T-cell (primary cell): ENCODE measurements at regions of chr15 and their contacts with region 1.

Region 1: GRCh38 chr15:98658831-98659699 is 10.7 kb downstream of the IGF1R start:
- DNase-seq: peak in 14 of 35 experiments; percentile 6 to 70 (median 20)
- ATAC-seq: peak; percentile 52 to 86 (median 78)
- H3K4me3 ChIP-seq: no peak overlapping the region
- H3K4me3 Mint-ChIP-seq: no peak overlapping the region
- H3K27ac ChIP-seq: no peak overlapping the region
- H3K27ac Mint-ChIP-seq: no peak overlapping the region
- H3K4me1 ChIP-seq: peaks cover 3 to 10% of the 10 kb centered on the region in 2 experiments
- H3K4me1 Mint-ChIP-seq: peaks cover 56 to 68% (median 58%) of the 10 kb centered on the region in 3 donors
- H3K27me3 ChIP-seq: peaks cover 0 to 5% of the 10 kb centered on the region in 2 experiments
- H3K27me3 Mint-ChIP-seq: peaks cover 0 to 13% of the 10 kb centered on the region in 2 donors

Region 2: DNA sequence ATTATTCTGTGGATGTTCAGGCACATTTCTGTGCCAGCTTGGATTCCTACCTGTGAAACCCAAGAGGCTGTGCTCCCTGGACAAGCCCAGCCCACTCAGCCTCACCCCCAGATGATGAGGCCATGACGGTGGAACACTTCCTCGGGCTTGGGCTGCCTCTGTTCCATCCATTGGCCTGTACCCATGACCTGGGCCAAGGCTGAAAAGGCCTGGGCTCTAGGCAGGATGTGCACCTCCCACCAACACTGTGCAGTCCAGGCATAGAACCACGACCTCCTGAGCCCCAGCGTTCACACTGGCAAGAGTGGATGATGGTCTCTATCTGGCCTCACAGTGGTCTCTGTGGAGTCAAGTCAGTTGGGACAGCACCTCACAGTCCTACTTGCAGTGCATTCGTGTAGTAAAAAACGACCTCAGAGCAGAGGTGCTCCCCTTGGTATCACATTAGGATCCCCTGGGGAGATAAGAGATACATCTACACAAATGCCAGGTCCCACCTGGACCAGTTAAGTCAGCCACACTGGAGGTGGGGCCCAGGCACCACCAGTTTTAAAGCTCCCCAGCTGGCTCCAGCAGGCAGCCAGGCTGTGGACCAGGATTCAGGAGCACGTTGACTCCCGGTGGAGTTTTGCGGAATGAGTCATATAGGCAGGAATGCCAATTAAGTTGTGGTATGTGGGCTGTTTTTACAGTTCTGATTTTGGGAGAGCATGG is 49.8 kb before region 1 on chr15:
- CTCF ChIA-PET with region 1: no interaction called
- POLR2A ChIA-PET with region 1: no interaction called
- DNase-seq: no peak
- ATAC-seq: no peak
- H3K4me3 ChIP-seq: no peak overlapping the region
- H3K4me3 Mint-ChIP-seq: no peak overlapping the region
- H3K27ac ChIP-seq: no peak overlapping the region
- H3K27ac Mint-ChIP-seq: no peak overlapping the region
- H3K4me1 ChIP-seq: peaks cover 9 to 14% of the 10 kb centered on the region in 2 experiments
- H3K4me1 Mint-ChIP-seq: peaks cover 8 to 12% (median 10%) of the 10 kb centered on the region in 3 donors
- H3K27me3 ChIP-seq: peaks cover 0 to 4% of the 10 kb centered on the region in 2 experiments
- H3K27me3 Mint-ChIP-seq: peaks cover 0 to 3% of the 10 kb centered on the region in 2 donors

Region 3: DNA sequence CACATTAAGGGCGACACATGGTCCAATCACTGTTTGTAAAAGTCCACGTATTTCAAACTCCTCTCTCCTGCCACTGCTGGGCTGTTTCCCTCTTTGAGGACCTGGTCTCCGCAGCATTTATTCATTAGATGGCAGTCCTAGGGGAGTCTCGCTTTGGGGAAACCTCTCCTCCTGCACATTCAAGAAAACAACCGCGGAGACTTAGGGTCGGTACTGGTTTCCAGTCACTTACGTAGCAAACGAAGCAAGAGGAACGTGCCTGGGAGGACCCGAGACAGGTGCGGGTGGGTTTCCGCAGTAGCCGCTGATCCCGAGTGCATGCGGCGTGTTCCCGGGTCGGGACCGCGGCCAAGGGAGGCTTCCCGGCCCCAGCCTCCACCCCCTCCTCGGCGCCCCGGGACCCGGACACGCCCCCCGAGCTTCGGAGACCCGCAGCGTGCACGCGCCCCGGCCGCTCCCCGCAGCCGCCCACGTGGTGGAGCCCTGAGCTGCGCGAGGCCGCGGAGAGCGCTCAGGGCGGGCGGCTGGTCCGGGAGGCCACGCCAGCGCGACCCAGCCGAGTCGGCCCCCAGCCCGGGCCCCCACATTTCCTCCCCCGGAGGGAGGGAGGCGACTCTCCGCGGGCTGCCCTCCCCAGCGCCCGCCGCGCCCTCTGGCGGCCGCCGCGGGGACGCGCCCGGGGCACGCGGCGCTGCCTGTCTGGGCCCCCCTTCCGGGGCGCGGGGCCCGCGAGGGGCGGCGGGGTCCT is 11.9 kb before region 1 on chr15:
- CTCF ChIA-PET with region 1: interaction called in 1 of 2 experiments, 10 read pairs
- POLR2A ChIA-PET with region 1: no interaction called
- DNase-seq: peak; percentile 16 to 78 (median 52)
- ATAC-seq: peak; percentile 47 to 54 (median 52)
- H3K4me3 ChIP-seq: peak overlapping the region; percentile 77 to 82
- H3K4me3 Mint-ChIP-seq: peak overlapping the region; percentile 80 to 96 (median 86)
- H3K27ac ChIP-seq: no peak overlapping the region
- H3K27ac Mint-ChIP-seq: peak overlapping the region; percentile 52 to 67
- H3K4me1 ChIP-seq: peaks cover 5 to 32% of the 10 kb centered on the region in 2 experiments
- H3K4me1 Mint-ChIP-seq: peaks cover 15 to 27% (median 18%) of the 10 kb centered on the region in 3 donors
- H3K27me3 ChIP-seq: peaks cover 0 to 29% of the 10 kb centered on the region in 2 experiments
- H3K27me3 Mint-ChIP-seq: peaks cover 0 to 21% of the 10 kb centered on the region in 2 donors

Region 4: DNA sequence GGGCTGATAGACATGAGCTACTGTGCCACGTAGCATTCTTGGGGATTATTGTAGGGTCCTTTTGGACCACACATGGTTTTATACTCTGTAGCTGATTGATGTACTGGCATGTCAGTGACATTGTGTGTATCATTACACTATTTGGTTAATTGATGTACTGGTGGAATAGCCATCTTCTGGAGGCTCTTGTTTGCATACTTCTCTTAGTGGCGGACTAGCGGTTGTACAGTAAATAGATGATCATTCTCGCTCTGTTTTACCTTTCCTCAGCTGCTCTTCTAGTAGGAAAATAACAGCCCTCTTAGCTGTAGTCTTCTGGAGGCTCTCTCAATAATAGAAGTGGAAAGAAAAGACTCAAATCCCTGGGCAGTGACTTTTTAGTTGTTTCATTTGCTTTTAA is 14.1 kb after region 1 on chr15:
- CTCF ChIA-PET with region 1: no interaction called
- POLR2A ChIA-PET with region 1: no interaction called
- DNase-seq: no peak
- ATAC-seq: no peak
- H3K4me3 ChIP-seq: no peak overlapping the region
- H3K4me3 Mint-ChIP-seq: no peak overlapping the region
- H3K27ac ChIP-seq: no peak overlapping the region
- H3K27ac Mint-ChIP-seq: peak overlapping the region in 1 of 2 donors; percentile 12
- H3K4me1 ChIP-seq: peaks cover 15 to 29% of the 10 kb centered on the region in 2 experiments
- H3K4me1 Mint-ChIP-seq: peaks cover 70 to 77% (median 76%) of the 10 kb centered on the region in 3 donors
- H3K27me3 ChIP-seq: peaks cover 0 to 2% of the 10 kb centered on the region in 2 experiments
- H3K27me3 Mint-ChIP-seq: no peaks in the 10 kb centered on the region

Region 5: DNA sequence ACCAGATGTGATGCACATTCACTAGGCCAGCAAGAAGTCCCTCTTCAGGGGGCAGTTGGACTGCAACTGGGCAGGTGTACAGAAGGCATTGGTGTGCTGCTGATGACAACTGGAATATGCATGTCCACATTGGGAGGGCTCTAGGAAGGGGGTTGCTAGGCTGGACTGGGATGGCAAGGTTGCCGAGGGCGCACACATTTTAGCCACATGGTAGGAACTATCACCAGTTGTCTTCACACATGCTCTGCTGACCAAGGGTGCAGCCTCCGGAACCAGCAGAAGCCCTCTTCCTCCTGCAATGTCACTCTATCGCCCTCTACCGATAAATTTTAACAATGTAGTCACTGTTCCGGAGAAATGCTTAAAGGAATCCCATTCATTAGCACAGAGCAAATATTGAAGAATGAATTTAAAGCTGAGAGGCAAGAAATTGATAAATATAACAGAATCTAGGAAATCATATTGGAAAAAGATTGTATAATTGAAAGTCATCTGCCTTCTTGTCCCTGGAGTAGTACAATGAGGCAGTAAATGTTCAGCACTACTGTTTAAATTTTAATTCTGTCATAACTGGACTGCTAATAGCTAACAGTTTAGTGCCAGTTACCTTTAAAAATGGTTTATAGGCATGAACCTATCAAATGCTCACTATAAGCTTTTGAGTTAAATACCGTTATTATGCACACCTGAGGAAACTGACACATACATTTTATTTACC is 1096.8 kb after region 1 on chr15:
- CTCF ChIA-PET with region 1: no interaction called
- POLR2A ChIA-PET with region 1: no interaction called
- DNase-seq: peak in 16 of 35 experiments; percentile 8 to 77 (median 20)
- ATAC-seq: peak; percentile 77 to 87 (median 82)
- H3K4me3 ChIP-seq: no peak overlapping the region
- H3K4me3 Mint-ChIP-seq: no peak overlapping the region
- H3K27ac ChIP-seq: no peak overlapping the region
- H3K27ac Mint-ChIP-seq: no peak overlapping the region
- H3K4me1 ChIP-seq: peaks cover 0 to 4% of the 10 kb centered on the region in 2 experiments
- H3K4me1 Mint-ChIP-seq: peaks cover 0 to 15% (median 5%) of the 10 kb centered on the region in 3 donors
- H3K27me3 ChIP-seq: no peaks in the 10 kb centered on the region
- H3K27me3 Mint-ChIP-seq: no peaks in the 10 kb centered on the region